Activated naive CD8-positive, alpha-beta T cell treated with anti-CD3 and anti-CD28 coated beads, Interleukin-2, amount 10 ng/mL, durations not matched to agents 7 days and 5 days (primary cell): ENCODE measurements at regions of chr19 and their contacts with region 1.

Region 1: GRCh38 chr19:36605101-36605876 is at the start of gene ZNF382:
- DNase-seq: peak; percentile 92
- ATAC-seq: peak; percentile 84
- H3K4me3 Mint-ChIP-seq: peak within 1 kb of the TSS; percentile 82
- H3K27ac Mint-ChIP-seq: peak within 1 kb of the TSS; percentile 91
- H3K4me1 Mint-ChIP-seq: peaks cover 15% of the 10 kb centered on the region
- H3K27me3 Mint-ChIP-seq: no peaks in the 10 kb centered on the region
- total RNA-seq, gene ZNF382: 15.6 to 16.2 TPM

Region 2: GRCh38 chr19:36528194-36528920 is 76.9 kb before region 1 on chr19 and contains the start of gene ZNF260:
- POLR2A ChIA-PET with region 1: interaction called, 28 read pairs
- DNase-seq: peak; percentile 94
- ATAC-seq: peak; percentile 88
- H3K4me3 Mint-ChIP-seq: peak within 1 kb of the TSS; percentile 99
- H3K27ac Mint-ChIP-seq: peak within 1 kb of the TSS; percentile 99
- H3K4me1 Mint-ChIP-seq: peaks cover 16% of the 10 kb centered on the region
- H3K27me3 Mint-ChIP-seq: no peaks in the 10 kb centered on the region
- total RNA-seq, gene ZNF260: 12.9 to 16.3 TPM